CD8-positive, alpha-beta T cell (primary cell): ENCODE measurements at regions of chrX and their contacts with region 1.

Region 1: GRCh38 chrX:47193475-47194193 is at the start of gene UBA1:
- DNase-seq: peak; percentile 81 to 98 (median 93)
- ATAC-seq: peak; percentile 73
- H3K4me3 ChIP-seq: peak within 1 kb of the TSS; percentile 78 to 92
- H3K4me3 Mint-ChIP-seq: peak within 1 kb of the TSS; percentile 93
- H3K27ac ChIP-seq: peak within 1 kb of the TSS; percentile 81 to 89
- H3K27ac Mint-ChIP-seq: peak within 1 kb of the TSS; percentile 98
- H3K4me1 ChIP-seq: peaks cover 45% of the 10 kb centered on the region
- H3K4me1 Mint-ChIP-seq: peaks cover 54% of the 10 kb centered on the region
- H3K27me3 ChIP-seq: no peaks in the 10 kb centered on the region
- H3K27me3 Mint-ChIP-seq: no peaks in the 10 kb centered on the region
- CTCF ChIP-seq: peak; percentile 36
- total RNA-seq, gene UBA1: 63.8 to 64.7 TPM

Region 2: DNA sequence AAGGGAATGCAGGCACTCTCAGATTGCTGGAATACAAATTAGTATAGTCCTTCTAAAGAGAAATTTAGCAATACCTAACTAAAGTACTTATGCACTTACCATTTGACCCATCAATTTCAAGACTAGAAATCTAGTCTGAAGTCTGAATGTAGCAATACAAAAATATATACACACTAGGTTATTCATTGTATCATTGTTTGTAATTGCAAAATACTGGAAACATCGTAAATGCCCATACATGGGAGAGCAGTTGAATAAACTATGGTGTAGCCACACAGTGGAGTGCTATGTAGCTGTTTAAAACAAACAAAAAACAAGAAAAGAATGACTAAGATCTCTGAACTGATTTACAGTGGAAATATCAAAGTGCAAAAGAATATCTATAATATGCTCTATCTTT is 994.8 kb before region 1 on chrX:
- CTCF ChIA-PET with region 1: no interaction called
- POLR2A ChIA-PET with region 1: no interaction called
- intact Hi-C with region 1: no loop called
- DNase-seq: no peak
- ATAC-seq: no peak
- H3K4me3 ChIP-seq: no peak overlapping the region
- H3K4me3 Mint-ChIP-seq: no peak overlapping the region
- H3K27ac ChIP-seq: no peak overlapping the region
- H3K27ac Mint-ChIP-seq: no peak overlapping the region
- H3K4me1 ChIP-seq: no peaks in the 10 kb centered on the region
- H3K4me1 Mint-ChIP-seq: peaks cover 8% of the 10 kb centered on the region
- H3K27me3 ChIP-seq: no peaks in the 10 kb centered on the region
- H3K27me3 Mint-ChIP-seq: no peaks in the 10 kb centered on the region
- CTCF ChIP-seq: no peak

Region 3: DNA sequence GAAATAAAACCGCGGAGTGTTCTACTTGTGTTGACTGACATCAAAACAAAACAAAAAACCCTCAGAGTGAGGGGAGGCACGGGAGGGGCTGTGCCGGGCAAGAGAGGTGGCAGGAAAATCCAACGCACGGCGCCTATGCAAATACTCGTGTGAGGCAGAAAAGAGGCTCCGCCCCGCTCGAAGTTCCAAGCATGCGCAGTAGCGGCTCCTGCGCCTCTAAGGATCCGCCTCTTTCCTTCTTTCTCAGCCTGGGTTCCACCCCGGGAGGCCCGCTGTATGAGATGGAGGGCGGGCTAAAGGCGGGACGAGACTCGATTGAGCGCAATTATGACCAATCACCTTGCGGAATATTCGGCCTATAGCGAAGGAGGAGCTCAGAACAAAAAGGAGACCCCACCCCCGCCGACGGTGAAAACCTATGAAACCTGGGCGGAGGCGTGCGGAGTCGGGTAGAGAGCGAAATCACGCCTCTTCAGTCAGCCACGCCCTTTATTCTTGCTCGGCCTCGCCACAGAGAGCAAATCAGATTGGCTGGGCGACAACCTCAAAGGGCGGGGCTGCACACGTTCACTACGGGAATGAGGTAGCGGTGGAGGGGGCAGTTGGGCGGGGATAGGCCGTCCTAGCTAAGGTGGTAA is 24.1 kb after region 1 on chrX:
- CTCF ChIA-PET with region 1: no interaction called
- POLR2A ChIA-PET with region 1: interaction called, 11 read pairs
- intact Hi-C with region 1: loop called (anchors 1 to 2 kb)
- DNase-seq: peak; percentile 83 to 98 (median 96)
- ATAC-seq: peak; percentile 80
- H3K4me3 ChIP-seq: peak overlapping the region; percentile 79
- H3K4me3 Mint-ChIP-seq: peak overlapping the region; percentile 93
- H3K27ac ChIP-seq: peak overlapping the region; percentile 98 to 100
- H3K27ac Mint-ChIP-seq: peak overlapping the region; percentile 98
- H3K4me1 ChIP-seq: peaks cover 26% of the 10 kb centered on the region
- H3K4me1 Mint-ChIP-seq: peaks cover 35% of the 10 kb centered on the region
- H3K27me3 ChIP-seq: no peaks in the 10 kb centered on the region
- H3K27me3 Mint-ChIP-seq: no peaks in the 10 kb centered on the region
- CTCF ChIP-seq: no peak

Region 4: GRCh38 chrX:47361538-47362511 is 168.2 kb after region 1 on chrX:
- CTCF ChIA-PET with region 1: no interaction called
- POLR2A ChIA-PET with region 1: no interaction called
- intact Hi-C with region 1: loop called (anchors 5 kb)
- DNase-seq: peak in 8 of 9 experiments; percentile 5 to 83 (median 28)
- ATAC-seq: peak; percentile 55
- H3K4me3 ChIP-seq: peak overlapping the region in 1 of 2 experiments; percentile 20
- H3K4me3 Mint-ChIP-seq: peak overlapping the region; percentile 58
- H3K27ac ChIP-seq: peak overlapping the region in 1 of 2 experiments; percentile 83
- H3K27ac Mint-ChIP-seq: peak overlapping the region; percentile 85
- H3K4me1 ChIP-seq: peaks cover 20% of the 10 kb centered on the region
- H3K4me1 Mint-ChIP-seq: peaks cover 33% of the 10 kb centered on the region
- H3K27me3 ChIP-seq: no peaks in the 10 kb centered on the region
- H3K27me3 Mint-ChIP-seq: no peaks in the 10 kb centered on the region
- CTCF ChIP-seq: no peak

Region 5: DNA sequence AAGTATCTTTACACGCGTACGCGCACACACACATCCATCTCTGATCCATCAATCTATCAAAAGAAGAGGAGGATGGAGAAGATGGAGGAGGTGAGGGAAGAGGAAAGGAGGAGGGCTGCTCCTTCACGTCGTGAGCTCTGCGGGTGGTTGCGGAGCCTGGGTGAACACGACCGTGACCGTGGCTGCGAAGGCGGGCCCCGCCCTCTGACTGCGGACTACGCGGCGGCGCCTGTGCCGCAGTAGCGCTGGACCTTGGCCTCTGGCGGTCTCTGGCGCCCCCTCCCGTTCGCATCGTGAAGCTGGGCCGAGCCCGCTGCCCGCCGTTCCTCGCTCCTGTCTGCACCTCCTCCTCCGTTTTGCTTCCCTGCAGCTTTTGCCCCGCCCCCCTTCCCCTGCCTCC is 329.7 kb after region 1 on chrX:
- CTCF ChIA-PET with region 1: interaction called, 19 read pairs
- POLR2A ChIA-PET with region 1: interaction called, 8 read pairs
- intact Hi-C with region 1: loop called (anchors 1 kb)
- DNase-seq: peak; percentile 53 to 90 (median 78)
- ATAC-seq: peak; percentile 97
- H3K4me3 ChIP-seq: peak overlapping the region; percentile 47 to 49
- H3K4me3 Mint-ChIP-seq: peak overlapping the region; percentile 69
- H3K27ac ChIP-seq: no peak overlapping the region
- H3K27ac Mint-ChIP-seq: no peak overlapping the region
- H3K4me1 ChIP-seq: no peaks in the 10 kb centered on the region
- H3K4me1 Mint-ChIP-seq: peaks cover 5% of the 10 kb centered on the region
- H3K27me3 ChIP-seq: no peaks in the 10 kb centered on the region
- H3K27me3 Mint-ChIP-seq: no peaks in the 10 kb centered on the region
- CTCF ChIP-seq: peak; percentile 72

Region 6: DNA sequence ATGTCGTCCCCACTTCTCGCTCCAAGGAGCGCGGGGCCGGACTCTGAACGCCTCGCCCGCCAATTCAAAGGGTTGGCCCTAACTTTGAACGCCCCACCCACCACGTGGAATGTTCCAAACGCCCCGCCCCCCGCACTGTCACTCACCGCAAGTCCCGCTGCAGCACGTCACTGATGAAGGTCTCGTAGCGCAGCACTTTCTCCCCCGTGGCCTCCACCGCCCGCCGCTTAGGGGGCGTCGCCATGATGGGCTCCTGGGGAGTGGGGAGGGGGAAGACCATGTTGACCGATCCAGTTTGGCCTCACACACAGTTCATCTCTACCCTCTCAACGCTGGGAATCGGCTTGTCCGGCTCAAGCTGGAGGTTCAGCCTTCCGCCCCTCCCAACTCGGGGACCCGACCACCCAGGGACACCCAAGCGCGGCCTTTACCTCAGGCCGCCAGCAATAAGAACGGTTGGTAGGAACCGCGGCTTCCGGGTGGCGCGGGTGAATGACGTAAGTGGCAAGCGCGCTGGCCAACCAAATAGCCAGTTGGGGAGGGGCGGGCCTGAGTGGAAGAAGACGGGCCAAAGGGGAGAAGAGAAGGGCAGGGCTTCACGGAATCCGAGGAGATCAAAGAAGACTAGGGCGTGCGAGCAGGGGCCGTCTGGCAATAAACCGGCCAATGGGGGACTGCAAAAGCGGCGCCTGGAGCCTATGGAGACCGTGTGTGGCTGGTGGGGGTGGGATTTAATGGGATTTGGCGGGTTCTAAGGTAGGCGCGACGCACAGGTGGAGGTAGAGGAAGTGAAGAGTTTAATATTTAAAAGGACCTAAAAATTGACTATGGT is 465.3 kb after region 1 on chrX and contains the start of gene UXT:
- CTCF ChIA-PET with region 1: no interaction called
- POLR2A ChIA-PET with region 1: no interaction called
- intact Hi-C with region 1: loop called (anchors 5 kb)
- DNase-seq: peak; percentile 80 to 95 (median 91)
- ATAC-seq: peak; percentile 81
- H3K4me3 ChIP-seq: peak within 1 kb of the TSS; percentile 86 to 92
- H3K4me3 Mint-ChIP-seq: peak within 1 kb of the TSS; percentile 90
- H3K27ac ChIP-seq: peak within 1 kb of the TSS; percentile 100
- H3K27ac Mint-ChIP-seq: peak within 1 kb of the TSS; percentile 99
- H3K4me1 ChIP-seq: peaks cover 16% of the 10 kb centered on the region
- H3K4me1 Mint-ChIP-seq: peaks cover 15% of the 10 kb centered on the region
- H3K27me3 ChIP-seq: no peaks in the 10 kb centered on the region
- H3K27me3 Mint-ChIP-seq: no peaks in the 10 kb centered on the region
- CTCF ChIP-seq: no peak
- total RNA-seq, gene UXT: 202 TPM

Region 7: DNA sequence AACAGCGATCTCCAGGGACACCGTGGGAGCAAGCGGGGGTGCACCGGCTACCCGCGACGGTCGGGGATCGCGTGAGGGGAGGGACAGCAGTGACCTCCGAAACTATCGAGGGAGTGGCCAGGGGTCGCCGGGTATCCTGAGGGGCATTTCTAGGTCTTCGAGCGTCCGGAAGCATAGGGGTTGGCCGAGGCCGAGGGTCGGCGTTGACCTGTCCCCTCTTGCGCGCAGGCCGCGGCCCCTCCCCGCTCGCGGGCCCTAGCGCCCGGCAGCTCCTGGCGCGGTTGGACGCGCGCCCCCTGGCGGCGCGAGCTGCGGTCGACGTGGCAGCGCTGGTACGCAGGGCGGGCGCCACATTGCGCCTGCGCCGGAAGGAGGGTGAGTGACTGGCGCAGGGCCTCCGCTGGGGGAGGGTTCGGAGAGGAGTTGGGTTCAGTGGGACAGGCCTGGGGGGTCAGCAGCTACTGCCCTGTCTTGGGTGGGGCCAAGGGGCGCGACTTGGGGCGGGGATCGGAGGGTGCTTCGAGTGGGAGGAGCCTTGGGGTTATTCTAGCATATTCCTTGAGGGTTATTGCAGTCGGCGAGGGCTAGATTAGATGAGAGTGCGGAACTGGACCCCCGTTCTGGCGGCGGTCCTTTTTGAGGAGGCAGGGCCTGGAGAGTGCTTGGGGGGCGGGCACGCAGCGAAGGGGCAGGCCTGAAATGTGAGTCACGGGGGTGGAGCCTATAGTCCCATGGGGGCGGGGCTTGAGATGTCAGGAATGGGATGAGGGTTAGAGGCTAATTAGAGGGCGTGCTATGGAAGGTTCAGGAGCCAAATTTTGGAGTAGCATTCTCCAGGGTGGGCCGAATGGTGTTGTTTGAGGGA is 1970.2 kb after region 1 on chrX:
- CTCF ChIA-PET with region 1: no interaction called
- POLR2A ChIA-PET with region 1: no interaction called
- intact Hi-C with region 1: no loop called
- DNase-seq: peak in 8 of 9 experiments; percentile 67 to 91 (median 82)
- ATAC-seq: peak; percentile 54
- H3K4me3 ChIP-seq: peak overlapping the region; percentile 49
- H3K4me3 Mint-ChIP-seq: peak overlapping the region; percentile 81
- H3K27ac ChIP-seq: peak overlapping the region; percentile 56 to 84
- H3K27ac Mint-ChIP-seq: peak overlapping the region; percentile 92
- H3K4me1 ChIP-seq: peaks cover 21% of the 10 kb centered on the region
- H3K4me1 Mint-ChIP-seq: peaks cover 27% of the 10 kb centered on the region
- H3K27me3 ChIP-seq: no peaks in the 10 kb centered on the region
- H3K27me3 Mint-ChIP-seq: no peaks in the 10 kb centered on the region
- CTCF ChIP-seq: peak; percentile 57